Natural killer cell (primary cell): ENCODE measurements at regions of chr11 and their contacts with region 1.

Region 1: DNA sequence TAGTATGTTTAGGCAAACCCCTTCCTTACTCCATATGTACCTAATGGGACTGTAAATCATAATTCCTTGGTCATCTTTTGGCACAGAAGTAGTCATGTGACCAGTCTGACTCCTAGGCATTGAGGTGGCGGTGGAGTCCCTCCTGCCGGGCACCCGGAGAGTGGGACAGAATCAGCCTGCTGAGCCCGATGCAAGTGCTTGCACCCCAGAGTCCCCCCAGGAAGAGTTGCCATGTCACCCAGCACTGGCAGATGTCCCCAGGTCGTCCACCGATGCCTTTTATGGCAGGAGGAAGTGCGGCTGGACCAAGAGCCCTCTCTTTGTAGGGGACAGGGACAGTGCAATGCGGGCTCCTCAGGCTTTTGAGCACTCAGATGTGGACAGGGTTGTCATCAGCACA is 500.3 kb downstream of the NELL1 start:
- DNase-seq: no peak
- ATAC-seq: no peak
- H3K4me3 ChIP-seq: no peak overlapping the region
- H3K4me3 Mint-ChIP-seq: no peak overlapping the region
- H3K27ac ChIP-seq: no peak overlapping the region
- H3K27ac Mint-ChIP-seq: no peak overlapping the region
- H3K4me1 ChIP-seq: no peaks in the 10 kb centered on the region
- H3K4me1 Mint-ChIP-seq: no peaks in the 10 kb centered on the region
- H3K27me3 ChIP-seq: no peaks in the 10 kb centered on the region
- H3K27me3 Mint-ChIP-seq: no peaks in the 10 kb centered on the region
- CTCF ChIP-seq: no peak

Region 2: GRCh38 chr11:21195995-21196394 is 26.4 kb after region 1 on chr11:
- intact Hi-C with region 1: loop called (anchors 1 kb)
- DNase-seq: no peak
- ATAC-seq: no peak
- H3K4me3 ChIP-seq: no peak overlapping the region
- H3K4me3 Mint-ChIP-seq: no peak overlapping the region
- H3K27ac ChIP-seq: no peak overlapping the region
- H3K27ac Mint-ChIP-seq: no peak overlapping the region
- H3K4me1 ChIP-seq: no peaks in the 10 kb centered on the region
- H3K4me1 Mint-ChIP-seq: no peaks in the 10 kb centered on the region
- H3K27me3 ChIP-seq: no peaks in the 10 kb centered on the region
- H3K27me3 Mint-ChIP-seq: no peaks in the 10 kb centered on the region
- CTCF ChIP-seq: no peak